ENCODE measurements at regions of chr18 and their contacts with region 1.

Region 1: DNA sequence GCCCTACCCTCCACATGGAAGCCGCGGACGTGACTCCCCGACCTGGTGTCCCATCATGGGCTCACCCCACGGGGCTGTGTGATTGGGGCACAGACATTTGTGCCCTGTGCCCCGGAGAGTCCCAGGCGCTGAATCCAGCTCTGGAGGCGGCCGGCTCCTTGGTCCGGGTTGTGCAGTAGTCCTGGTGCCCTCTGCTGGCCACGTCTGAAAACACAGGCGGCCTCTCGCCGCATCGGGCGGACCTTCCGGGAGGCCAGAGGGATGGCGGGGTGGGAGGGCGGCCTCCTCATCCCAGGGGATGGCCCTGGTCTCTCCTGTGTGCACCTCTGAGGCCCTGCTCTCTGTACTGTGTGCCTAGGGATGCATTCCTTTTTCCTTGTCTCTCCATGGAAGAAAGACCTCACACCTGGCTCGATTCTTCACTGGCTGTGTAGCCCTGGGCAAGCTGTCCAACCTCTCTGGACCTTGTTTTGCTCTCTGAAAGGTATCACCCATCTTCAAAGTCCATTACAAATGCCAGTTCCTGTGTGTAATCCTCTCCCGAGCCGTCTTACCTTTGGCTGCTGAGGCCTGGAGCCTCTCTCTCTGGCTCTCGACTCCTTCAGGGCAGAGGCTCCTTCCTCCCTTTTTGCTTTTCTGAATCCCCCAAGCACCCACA is 27.6 kb downstream of the CELF4 start:
- DNase-seq: peak; percentile 25 to 54 (median 50)
- H3K4me3 ChIP-seq: no peak overlapping the region
- H3K27ac ChIP-seq: no peak overlapping the region
- H3K4me1 ChIP-seq: no peaks in the 10 kb centered on the region
- H3K27me3 ChIP-seq: peaks cover 4 to 55% (median 18%) of the 10 kb centered on the region in 5 experiments

Region 2: GRCh38 chr18:37527395-37527794 is 10.6 kb before region 1 on chr18:
- CTCF ChIA-PET with region 1: interaction called, 11 read pairs
- POLR2A ChIA-PET with region 1: no interaction called
- DNase-seq: no peak
- H3K4me3 ChIP-seq: no peak overlapping the region
- H3K27ac ChIP-seq: no peak overlapping the region
- H3K4me1 ChIP-seq: peaks cover 0 to 6% (median 2%) of the 10 kb centered on the region in 4 experiments
- H3K27me3 ChIP-seq: peaks cover 0 to 73% (median 47%) of the 10 kb centered on the region in 5 experiments

Measured in common myeloid progenitor, CD34-positive (primary cell).